ENCODE measurements at regions of chrX and their contacts with region 1.

Region 1: GRCh38 chrX:120250522-120251271 is at the start of gene ZBTB33:
- DNase-seq: peak; percentile 92
- ATAC-seq: peak; percentile 99
- H3K4me3 Mint-ChIP-seq: peak within 1 kb of the TSS; percentile 97
- H3K27ac Mint-ChIP-seq: peak within 1 kb of the TSS; percentile 94
- H3K4me1 Mint-ChIP-seq: peaks cover 29% of the 10 kb centered on the region
- H3K27me3 Mint-ChIP-seq: no peaks in the 10 kb centered on the region
- total RNA-seq, gene ZBTB33: 16.9 to 17.4 TPM

Region 2: GRCh38 chrX:120302434-120302833 is 51.7 kb after region 1 on chrX:
- CTCF ChIA-PET with region 1: interaction called, 10 read pairs
- DNase-seq: peak; percentile 81
- ATAC-seq: peak; percentile 98
- H3K4me3 Mint-ChIP-seq: peak overlapping the region; percentile 18
- H3K27ac Mint-ChIP-seq: peak overlapping the region; percentile 81
- H3K4me1 Mint-ChIP-seq: peaks cover 35% of the 10 kb centered on the region
- H3K27me3 Mint-ChIP-seq: no peaks in the 10 kb centered on the region

Region 3: DNA sequence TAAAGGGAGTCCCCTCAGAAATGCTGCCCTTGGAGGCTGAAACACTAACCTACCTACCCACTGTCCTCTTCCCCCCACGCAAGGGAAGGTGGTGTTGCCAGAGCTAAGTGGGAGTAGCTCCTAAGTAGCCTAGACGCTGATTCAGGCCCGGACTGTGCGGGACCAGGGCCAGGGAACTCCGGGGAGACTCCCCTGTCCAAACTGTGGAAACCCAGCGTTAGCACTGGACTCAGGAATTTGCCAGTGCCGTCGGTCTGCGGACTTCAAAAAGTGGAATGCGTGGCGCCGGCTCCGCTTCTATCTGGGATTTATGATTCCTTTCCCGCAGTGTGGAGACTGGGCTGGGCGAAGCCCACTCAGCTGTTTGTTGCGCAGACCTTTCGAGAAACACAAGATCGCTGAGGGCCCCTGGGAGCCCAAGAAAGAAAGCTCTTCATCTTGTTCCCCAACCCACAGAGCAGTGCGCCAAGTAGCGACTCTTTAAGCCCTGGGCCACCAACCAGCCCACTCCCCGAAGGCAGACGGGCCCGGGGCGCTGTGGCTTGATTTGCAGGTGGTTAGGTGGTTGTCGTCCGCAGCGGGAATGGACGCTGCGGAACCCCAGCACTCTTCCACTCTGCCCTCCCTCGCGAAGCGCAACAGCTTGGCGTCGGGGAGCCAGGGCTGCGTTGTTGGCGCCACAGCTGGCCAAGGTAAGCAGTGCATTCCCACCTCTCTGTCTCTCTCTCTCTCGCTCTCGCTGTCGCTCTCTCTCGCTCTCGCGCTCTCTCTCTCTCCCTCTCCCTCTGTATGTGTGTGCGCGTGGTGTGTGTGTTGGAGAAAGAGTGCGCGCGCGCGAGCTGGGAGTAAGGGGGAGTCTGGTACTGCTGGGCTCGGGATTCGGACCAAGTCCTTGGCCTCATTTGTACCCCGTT is 58.5 kb after region 1 on chrX:
- CTCF ChIA-PET with region 1: interaction called, 13 read pairs
- DNase-seq: peak; percentile 86
- ATAC-seq: peak; percentile 96
- H3K4me3 Mint-ChIP-seq: peak overlapping the region; percentile 74
- H3K27ac Mint-ChIP-seq: peak overlapping the region; percentile 50
- H3K4me1 Mint-ChIP-seq: peaks cover 38% of the 10 kb centered on the region
- H3K27me3 Mint-ChIP-seq: peaks cover 46% of the 10 kb centered on the region

Region 4: DNA sequence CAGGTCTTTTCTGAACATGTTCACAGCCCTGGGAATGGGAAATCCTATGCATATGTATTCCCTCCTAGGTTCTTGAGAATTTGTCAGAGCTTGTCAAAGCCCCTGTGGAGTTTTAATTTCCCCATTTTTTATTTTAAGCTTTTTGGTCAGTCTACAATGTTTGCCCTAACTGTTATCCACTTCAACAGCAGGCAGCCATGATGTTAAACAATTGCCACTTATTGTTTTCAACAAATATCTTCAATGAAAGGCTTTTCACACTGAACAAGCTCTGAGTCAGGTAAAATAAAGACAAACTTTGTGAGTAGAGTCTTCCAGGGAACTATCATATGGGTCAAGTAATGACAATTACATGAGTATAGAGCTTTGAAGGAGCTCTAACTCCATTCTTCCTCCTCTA is 86.2 kb after region 1 on chrX:
- CTCF ChIA-PET with region 1: no interaction called
- DNase-seq: no peak
- ATAC-seq: no peak
- H3K4me3 Mint-ChIP-seq: no peak overlapping the region
- H3K27ac Mint-ChIP-seq: no peak overlapping the region
- H3K4me1 Mint-ChIP-seq: no peaks in the 10 kb centered on the region
- H3K27me3 Mint-ChIP-seq: no peaks in the 10 kb centered on the region

Region 5: GRCh38 chrX:120380699-120381098 is 130.0 kb after region 1 on chrX:
- CTCF ChIA-PET with region 1: no interaction called
- DNase-seq: peak; percentile 42
- ATAC-seq: peak; percentile 72
- H3K4me3 Mint-ChIP-seq: no peak overlapping the region
- H3K27ac Mint-ChIP-seq: no peak overlapping the region
- H3K4me1 Mint-ChIP-seq: peaks cover 2% of the 10 kb centered on the region
- H3K27me3 Mint-ChIP-seq: peaks cover 9% of the 10 kb centered on the region

Measured in activated CD8-positive, alpha-beta memory T cell treated with anti-CD3 and anti-CD28 coated beads, Interleukin-2, amount 10 ng/mL, durations not matched to agents 7 days and 5 days (primary cell).